ENCODE measurements at regions of chr4 and their contacts with region 1.

Region 1: GRCh38 chr4:125735102-125735501 is 420.3 kb downstream of the FAT4 start:
- DNase-seq: peak in 2 of 6 donors; percentile 26 to 41
- ATAC-seq: peak; percentile 51 to 86 (median 70)
- H3K4me3 ChIP-seq: no peak overlapping the region
- H3K27ac ChIP-seq: no peak overlapping the region
- H3K4me1 ChIP-seq: peaks cover 0 to 2% (median 0%) of the 10 kb centered on the region in 3 donors
- H3K27me3 ChIP-seq: no peaks in the 10 kb centered on the region
- CTCF ChIP-seq: no peak

Region 2: GRCh38 chr4:125314676-125315575 is 420.2 kb before region 1 on chr4 and contains the start of gene FAT4:
- intact Hi-C with region 1: loop called in 1 of 3 experiments (anchors 10 kb)
- DNase-seq: peak; percentile 86 to 93 (median 89)
- ATAC-seq: peak; percentile 88 to 93 (median 89)
- H3K4me3 ChIP-seq: peak within 1 kb of the TSS; percentile 54 to 83 (median 78)
- H3K27ac ChIP-seq: peak within 1 kb of the TSS in 3 of 4 donors; percentile 54 to 72 (median 70)
- H3K4me1 ChIP-seq: peaks cover 0 to 11% (median 0%) of the 10 kb centered on the region in 3 donors
- H3K27me3 ChIP-seq: peaks cover 0 to 8% (median 0%) of the 10 kb centered on the region in 4 donors
- CTCF ChIP-seq: no peak
- total RNA-seq, gene FAT4: 0.85 to 2.6 (median 1.7) TPM